Breast epithelium (tissue), 4 donors: ENCODE measurements at regions of chr15 and their contacts with region 1.

Region 1: DNA sequence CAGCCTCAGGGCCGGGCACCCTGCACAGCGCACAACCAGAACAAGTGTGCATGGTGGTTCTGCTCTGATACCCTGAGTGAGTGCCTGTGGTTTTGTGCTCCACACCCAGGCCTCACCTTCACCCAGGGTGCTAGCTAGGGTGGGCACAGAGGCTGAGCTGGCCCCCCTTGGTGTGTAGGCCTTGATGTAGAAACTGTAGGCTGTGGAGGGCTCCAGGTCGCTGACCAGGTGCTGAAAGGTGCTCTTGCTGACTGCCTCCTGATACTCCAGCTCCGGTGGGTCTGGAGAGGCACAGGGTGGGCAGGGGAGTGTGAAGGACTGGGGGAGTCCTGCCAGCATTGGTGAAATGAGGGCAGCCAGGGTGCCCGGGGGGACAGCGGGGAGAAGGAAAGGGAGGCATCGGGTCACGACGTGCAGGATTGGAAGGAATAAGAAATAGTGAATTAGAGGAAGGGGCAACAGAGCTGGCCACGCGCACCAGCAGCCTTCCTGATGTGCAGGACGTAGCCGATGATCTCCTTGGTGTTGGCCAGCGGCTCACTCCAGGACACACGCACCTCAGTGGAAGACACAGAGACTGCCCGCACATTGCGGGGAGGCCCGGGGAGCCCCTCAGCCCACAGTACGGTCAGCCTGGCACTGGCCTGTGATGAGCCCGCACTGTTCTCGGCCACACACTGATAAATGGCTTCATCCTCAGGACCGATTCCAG is 26.6 kb downstream of the RNU5B-1 start:
- DNase-seq: no peak
- H3K4me3 ChIP-seq: no peak overlapping the region
- H3K27ac ChIP-seq: no peak overlapping the region
- H3K4me1 ChIP-seq: no peaks in the 10 kb centered on the region
- H3K27me3 ChIP-seq: no peaks in the 10 kb centered on the region
- CTCF ChIP-seq: no peak
- POLR2A ChIP-seq: no peak

Region 2: GRCh38 chr15:64975390-64975789 is 355.7 kb before region 1 on chr15:
- intact Hi-C with region 1: no loop called
- DNase-seq: no peak
- H3K4me3 ChIP-seq: no peak overlapping the region
- H3K27ac ChIP-seq: no peak overlapping the region
- H3K4me1 ChIP-seq: no peaks in the 10 kb centered on the region
- H3K27me3 ChIP-seq: no peaks in the 10 kb centered on the region
- CTCF ChIP-seq: no peak
- POLR2A ChIP-seq: no peak

Region 3: GRCh38 chr15:65377976-65378366 is 46.9 kb after region 1 on chr15 and contains the start of gene IGDCC3:
- intact Hi-C with region 1: loop called (anchors 2 kb)
- DNase-seq: no peak
- H3K4me3 ChIP-seq: peak within 1 kb of the TSS; percentile 53 to 89 (median 60)
- H3K27ac ChIP-seq: no peak within 1 kb of the TSS
- H3K4me1 ChIP-seq: peaks cover 0 to 3% of the 10 kb centered on the region in 2 donors
- H3K27me3 ChIP-seq: peaks cover 0 to 22% of the 10 kb centered on the region in 2 donors
- CTCF ChIP-seq: no peak
- POLR2A ChIP-seq: no peak
- total RNA-seq, gene IGDCC3: 0.33 to 1.8 TPM in 2 of 3 donors, not detected in the other

Region 4: DNA sequence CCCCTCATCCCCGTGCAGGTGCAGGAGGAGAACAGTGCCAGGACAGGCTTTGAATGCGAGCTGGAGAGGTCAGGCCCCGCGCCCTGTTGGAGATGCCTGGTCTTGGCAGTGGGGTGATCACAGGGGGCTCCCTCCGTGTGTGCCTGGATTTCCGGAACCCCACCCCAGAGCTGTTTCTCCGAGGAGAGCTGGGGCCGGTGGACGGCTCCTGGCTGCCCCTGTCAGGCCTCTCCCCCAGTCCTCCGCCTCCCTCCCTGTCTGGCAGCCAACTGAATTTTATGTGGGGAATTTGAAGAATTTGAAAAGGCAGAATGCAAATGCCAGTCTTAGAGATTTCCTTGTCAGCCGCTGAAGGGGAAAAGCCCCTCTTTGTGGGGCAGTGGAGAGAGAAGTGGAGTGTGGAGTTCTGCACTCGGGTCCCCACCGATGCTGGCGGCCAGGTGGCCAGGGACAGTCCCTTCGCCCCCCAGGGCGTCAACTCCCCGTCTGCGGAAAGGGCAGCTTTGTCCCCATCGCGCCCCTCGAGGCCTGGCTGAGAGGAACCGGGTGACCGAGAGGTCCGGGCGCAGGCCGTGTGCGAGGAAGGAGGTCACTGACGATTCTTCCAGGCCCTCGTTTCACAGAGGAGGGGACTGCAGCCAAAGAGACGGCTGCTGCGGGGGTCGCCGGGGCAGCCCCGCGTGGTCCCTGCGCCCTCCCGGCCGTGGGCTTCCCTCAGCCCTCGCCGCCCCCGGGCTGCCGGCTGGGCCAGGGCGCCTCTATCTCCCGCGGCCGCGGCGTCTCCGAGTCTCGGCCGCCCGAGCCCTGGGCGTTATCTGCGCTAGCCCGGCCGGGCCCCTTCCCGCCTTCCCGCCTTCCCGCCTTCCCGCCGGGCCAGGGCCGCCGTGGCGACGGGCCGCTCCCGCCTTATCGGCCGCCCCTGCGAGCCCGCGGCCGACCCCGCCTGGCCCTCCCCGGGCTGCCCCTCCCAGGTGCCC is 1290.7 kb after region 1 on chr15:
- intact Hi-C with region 1: no loop called
- DNase-seq: no peak
- H3K4me3 ChIP-seq: peak overlapping the region; percentile 15 to 57 (median 43)
- H3K27ac ChIP-seq: peak overlapping the region; percentile 17 to 53
- H3K4me1 ChIP-seq: no peaks in the 10 kb centered on the region
- H3K27me3 ChIP-seq: peaks cover 0 to 9% of the 10 kb centered on the region in 2 donors
- CTCF ChIP-seq: no peak
- POLR2A ChIP-seq: no peak